CD8-positive, alpha-beta T cell (primary cell): ENCODE measurements at regions of chr20 and their contacts with region 1.

Region 1: DNA sequence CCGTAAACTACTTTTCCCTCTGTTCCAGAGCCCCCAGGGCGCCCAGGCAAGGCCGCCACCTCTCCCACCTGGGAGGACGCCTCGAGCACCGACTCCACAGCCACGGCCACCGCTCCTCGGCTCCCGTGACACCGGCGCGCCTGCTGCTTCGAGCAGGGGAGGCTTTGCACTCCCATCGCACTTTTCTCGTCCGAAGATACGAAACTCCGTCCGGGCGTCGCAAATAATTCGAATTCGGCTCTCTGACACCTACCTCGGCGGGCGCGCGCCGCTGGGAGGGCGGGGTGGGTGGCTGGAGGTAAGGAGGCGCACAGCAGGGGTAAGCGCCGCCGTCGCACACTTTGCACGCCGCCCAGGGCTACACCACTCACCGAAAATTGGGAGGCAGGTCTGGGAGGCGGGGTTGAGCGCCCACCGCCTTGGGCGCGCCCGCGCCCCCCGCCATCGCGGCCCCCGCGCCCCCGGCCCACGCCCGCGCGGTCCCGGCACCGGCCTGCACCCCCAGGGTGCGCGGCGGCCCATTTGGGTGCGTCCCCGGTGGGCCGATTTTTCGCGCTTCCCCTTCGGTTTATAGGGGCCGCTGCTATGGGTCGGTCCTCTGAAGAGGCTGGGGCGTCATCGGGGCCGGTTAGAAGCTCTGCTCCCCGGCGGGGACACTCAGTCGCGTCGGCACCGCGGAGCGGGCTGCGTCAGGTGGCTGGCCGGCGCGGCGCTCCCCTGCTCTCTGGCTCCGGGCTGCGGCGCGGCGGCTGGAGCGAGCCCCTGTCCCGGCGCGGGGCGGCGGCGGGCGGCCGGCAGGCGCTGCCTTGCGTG is 36.2 kb downstream of the GNAS start:
- DNase-seq: peak; percentile 69 to 92 (median 82)
- ATAC-seq: peak; percentile 49
- H3K4me3 ChIP-seq: peak overlapping the region; percentile 66 to 72
- H3K4me3 Mint-ChIP-seq: peak overlapping the region; percentile 83
- H3K27ac ChIP-seq: peak overlapping the region; percentile 79 to 95
- H3K27ac Mint-ChIP-seq: peak overlapping the region; percentile 92
- H3K4me1 ChIP-seq: peaks cover 14% of the 10 kb centered on the region
- H3K4me1 Mint-ChIP-seq: peaks cover 35% of the 10 kb centered on the region
- H3K27me3 ChIP-seq: no peaks in the 10 kb centered on the region
- H3K27me3 Mint-ChIP-seq: no peaks in the 10 kb centered on the region
- CTCF ChIP-seq: no peak

Region 2: DNA sequence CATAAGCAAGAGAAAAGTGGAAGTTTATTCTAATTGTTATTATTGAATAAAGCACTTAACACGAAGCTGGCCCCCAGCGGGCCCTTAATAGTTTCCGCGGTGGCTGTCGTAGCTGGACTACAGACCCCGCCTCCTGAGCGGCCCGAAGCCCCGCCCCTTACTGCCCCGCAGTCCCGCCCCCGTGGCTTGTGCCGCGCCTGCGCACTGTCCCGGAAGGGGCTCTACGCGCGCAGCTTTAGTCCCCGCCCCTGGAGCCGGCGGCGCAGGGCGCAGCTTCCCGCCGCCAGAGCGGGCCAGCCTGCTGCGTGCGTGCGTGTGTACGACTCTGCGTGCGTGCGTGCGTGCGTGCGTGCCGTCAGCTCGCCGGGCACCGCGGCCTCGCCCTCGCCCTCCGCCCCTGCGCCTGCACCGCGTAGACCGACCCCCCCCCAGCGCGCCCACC is 499.8 kb before region 1 on chr20 and contains the start of gene VAPB:
- CTCF ChIA-PET with region 1: no interaction called
- POLR2A ChIA-PET with region 1: no interaction called
- intact Hi-C with region 1: loop called in 1 of 2 experiments (anchors 1 kb)
- DNase-seq: peak; percentile 94 to 99 (median 97)
- ATAC-seq: peak; percentile 95
- H3K4me3 ChIP-seq: peak within 1 kb of the TSS; percentile 87 to 90
- H3K4me3 Mint-ChIP-seq: peak within 1 kb of the TSS; percentile 88
- H3K27ac ChIP-seq: peak within 1 kb of the TSS; percentile 98 to 99
- H3K27ac Mint-ChIP-seq: peak within 1 kb of the TSS; percentile 96
- H3K4me1 ChIP-seq: peaks cover 43% of the 10 kb centered on the region
- H3K4me1 Mint-ChIP-seq: peaks cover 40% of the 10 kb centered on the region
- H3K27me3 ChIP-seq: peaks cover 0 to 2% of the 10 kb centered on the region in 2 experiments
- H3K27me3 Mint-ChIP-seq: peaks cover 4% of the 10 kb centered on the region
- CTCF ChIP-seq: no peak
- total RNA-seq, gene VAPB: 29.3 to 32.3 TPM

Region 3: GRCh38 chr20:58714340-58714860 is 174.3 kb before region 1 on chr20:
- CTCF ChIA-PET with region 1: no interaction called
- POLR2A ChIA-PET with region 1: no interaction called
- intact Hi-C with region 1: no loop called
- DNase-seq: peak in 1 of 9 experiments; percentile 8
- ATAC-seq: no peak
- H3K4me3 ChIP-seq: no peak overlapping the region
- H3K4me3 Mint-ChIP-seq: no peak overlapping the region
- H3K27ac ChIP-seq: no peak overlapping the region
- H3K27ac Mint-ChIP-seq: no peak overlapping the region
- H3K4me1 ChIP-seq: no peaks in the 10 kb centered on the region
- H3K4me1 Mint-ChIP-seq: no peaks in the 10 kb centered on the region
- H3K27me3 ChIP-seq: no peaks in the 10 kb centered on the region
- H3K27me3 Mint-ChIP-seq: no peaks in the 10 kb centered on the region
- CTCF ChIP-seq: no peak

Region 4: DNA sequence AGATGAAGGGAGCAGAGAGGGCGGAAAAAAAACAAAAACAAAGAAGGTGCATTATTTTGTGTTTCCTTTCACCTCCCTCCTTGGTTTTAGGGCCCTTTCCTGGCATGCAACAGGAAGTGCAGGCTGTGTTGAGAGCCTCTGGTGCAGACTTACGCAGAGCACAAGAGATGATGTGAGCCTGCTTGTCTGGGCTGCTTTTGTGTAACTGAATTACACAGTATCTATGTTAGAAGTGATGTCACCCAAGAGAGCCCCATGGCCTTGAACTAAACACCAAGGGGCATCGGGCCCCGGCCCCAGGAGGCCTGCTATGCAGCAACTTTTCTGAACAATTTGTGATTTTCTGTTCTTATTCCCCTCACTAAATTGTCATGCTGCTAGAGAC is 10.8 kb before region 1 on chr20:
- CTCF ChIA-PET with region 1: no interaction called
- POLR2A ChIA-PET with region 1: interaction called, 8 read pairs
- intact Hi-C with region 1: loop called in 1 of 2 experiments (anchors 2 kb)
- DNase-seq: peak in 2 of 9 experiments; percentile 55 to 66
- ATAC-seq: peak; percentile 98
- H3K4me3 ChIP-seq: no peak overlapping the region
- H3K4me3 Mint-ChIP-seq: peak overlapping the region; percentile 13
- H3K27ac ChIP-seq: no peak overlapping the region
- H3K27ac Mint-ChIP-seq: peak overlapping the region; percentile 88
- H3K4me1 ChIP-seq: peaks cover 16% of the 10 kb centered on the region
- H3K4me1 Mint-ChIP-seq: peaks cover 21% of the 10 kb centered on the region
- H3K27me3 ChIP-seq: no peaks in the 10 kb centered on the region
- H3K27me3 Mint-ChIP-seq: no peaks in the 10 kb centered on the region
- CTCF ChIP-seq: no peak

Region 5: GRCh38 chr20:58980700-58981627 is 92.2 kb after region 1 on chr20 and contains the start of gene NELFCD:
- CTCF ChIA-PET with region 1: no interaction called
- POLR2A ChIA-PET with region 1: interaction called, 14 read pairs
- intact Hi-C with region 1: loop called (anchors 1 to 2 kb)
- DNase-seq: peak; percentile 81 to 94 (median 89)
- ATAC-seq: peak; percentile 87
- H3K4me3 ChIP-seq: peak within 1 kb of the TSS; percentile 77 to 93
- H3K4me3 Mint-ChIP-seq: peak within 1 kb of the TSS; percentile 93
- H3K27ac ChIP-seq: peak within 1 kb of the TSS; percentile 62 to 66
- H3K27ac Mint-ChIP-seq: peak within 1 kb of the TSS; percentile 94
- H3K4me1 ChIP-seq: peaks cover 29% of the 10 kb centered on the region
- H3K4me1 Mint-ChIP-seq: peaks cover 39% of the 10 kb centered on the region
- H3K27me3 ChIP-seq: no peaks in the 10 kb centered on the region
- H3K27me3 Mint-ChIP-seq: no peaks in the 10 kb centered on the region
- CTCF ChIP-seq: no peak
- total RNA-seq, gene NELFCD: 101 to 113 TPM

Region 6: GRCh38 chr20:59159493-59160376 is 271.0 kb after region 1 on chr20:
- CTCF ChIA-PET with region 1: no interaction called
- POLR2A ChIA-PET with region 1: interaction called, 3 read pairs
- intact Hi-C with region 1: loop called in 1 of 2 experiments (anchors 5 kb)
- DNase-seq: peak; percentile 56 to 97 (median 79)
- ATAC-seq: peak; percentile 86
- H3K4me3 ChIP-seq: peak overlapping the region; percentile 47 to 67
- H3K4me3 Mint-ChIP-seq: peak overlapping the region; percentile 83
- H3K27ac ChIP-seq: peak overlapping the region; percentile 79 to 93
- H3K27ac Mint-ChIP-seq: peak overlapping the region; percentile 98
- H3K4me1 ChIP-seq: peaks cover 69% of the 10 kb centered on the region
- H3K4me1 Mint-ChIP-seq: peaks cover 91% of the 10 kb centered on the region
- H3K27me3 ChIP-seq: no peaks in the 10 kb centered on the region
- H3K27me3 Mint-ChIP-seq: no peaks in the 10 kb centered on the region
- CTCF ChIP-seq: peak; percentile 23

Region 7: DNA sequence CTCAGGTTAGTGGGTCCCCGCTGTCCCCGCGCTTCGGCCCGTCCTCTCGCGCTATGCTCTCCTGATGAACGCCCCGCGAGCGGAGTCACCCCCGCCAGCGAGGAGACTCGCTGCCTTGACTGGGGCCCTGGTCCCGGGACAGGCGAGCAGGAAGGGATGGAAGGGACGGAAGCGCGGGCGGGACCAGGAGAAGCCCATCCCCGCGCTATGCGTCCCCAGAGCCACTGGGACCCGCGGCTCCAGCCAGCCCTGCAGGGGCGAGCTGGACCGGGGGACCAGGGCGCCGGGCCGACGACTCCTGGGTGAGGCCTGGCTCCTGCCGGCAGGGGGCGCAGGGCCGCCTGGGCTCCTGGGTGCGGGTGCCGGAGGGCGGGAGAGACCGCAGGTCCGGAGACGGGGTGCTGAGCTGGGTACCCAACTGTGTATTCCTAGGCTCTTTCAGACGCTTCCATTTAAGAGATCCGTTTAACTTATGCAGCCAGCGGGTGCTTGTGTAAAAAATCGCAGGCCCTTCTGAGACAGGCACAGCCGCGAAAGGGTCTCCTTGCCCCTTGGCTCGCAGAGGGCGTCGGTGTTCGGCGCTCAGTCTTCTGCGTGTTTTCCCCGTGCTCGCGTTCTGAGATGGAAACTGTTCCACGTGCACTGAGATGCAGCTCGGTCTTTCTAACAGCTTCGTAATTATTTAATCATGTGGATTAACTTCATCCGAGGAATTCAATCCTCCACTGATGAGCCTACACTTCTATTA is 1045.3 kb after region 1 on chr20:
- CTCF ChIA-PET with region 1: no interaction called
- POLR2A ChIA-PET with region 1: no interaction called
- intact Hi-C with region 1: loop called in 1 of 2 experiments (anchors 10 kb)
- DNase-seq: peak; percentile 60 to 87 (median 79)
- ATAC-seq: peak; percentile 73
- H3K4me3 ChIP-seq: peak overlapping the region; percentile 65 to 85
- H3K4me3 Mint-ChIP-seq: peak overlapping the region; percentile 79
- H3K27ac ChIP-seq: peak overlapping the region; percentile 32 to 68
- H3K27ac Mint-ChIP-seq: peak overlapping the region; percentile 57
- H3K4me1 ChIP-seq: peaks cover 12% of the 10 kb centered on the region
- H3K4me1 Mint-ChIP-seq: peaks cover 26% of the 10 kb centered on the region
- H3K27me3 ChIP-seq: no peaks in the 10 kb centered on the region
- H3K27me3 Mint-ChIP-seq: no peaks in the 10 kb centered on the region
- CTCF ChIP-seq: peak; percentile 94